ENCODE measurements at regions of chr2 and their contacts with region 1.

Region 1: GRCh38 chr2:189661148-189661956 is at the start of gene ASNSD1:
- DNase-seq: peak; percentile 95 to 99
- ATAC-seq: peak; percentile 96 to 98
- H3K4me3 ChIP-seq: peak within 1 kb of the TSS; percentile 78
- H3K27ac ChIP-seq: peak within 1 kb of the TSS; percentile 88 to 93
- H3K4me1 ChIP-seq: peaks cover 13% of the 10 kb centered on the region
- CTCF ChIP-seq: peak; percentile 99
- EP300 ChIP-seq: no peak
- POLR2A ChIP-seq: peak; percentile 95
- RAD21 ChIP-seq: peak; percentile 92 to 94
- polyA plus RNA-seq, gene ASNSD1: 47.7 and 69.0 TPM in 2 replicates

Region 2: DNA sequence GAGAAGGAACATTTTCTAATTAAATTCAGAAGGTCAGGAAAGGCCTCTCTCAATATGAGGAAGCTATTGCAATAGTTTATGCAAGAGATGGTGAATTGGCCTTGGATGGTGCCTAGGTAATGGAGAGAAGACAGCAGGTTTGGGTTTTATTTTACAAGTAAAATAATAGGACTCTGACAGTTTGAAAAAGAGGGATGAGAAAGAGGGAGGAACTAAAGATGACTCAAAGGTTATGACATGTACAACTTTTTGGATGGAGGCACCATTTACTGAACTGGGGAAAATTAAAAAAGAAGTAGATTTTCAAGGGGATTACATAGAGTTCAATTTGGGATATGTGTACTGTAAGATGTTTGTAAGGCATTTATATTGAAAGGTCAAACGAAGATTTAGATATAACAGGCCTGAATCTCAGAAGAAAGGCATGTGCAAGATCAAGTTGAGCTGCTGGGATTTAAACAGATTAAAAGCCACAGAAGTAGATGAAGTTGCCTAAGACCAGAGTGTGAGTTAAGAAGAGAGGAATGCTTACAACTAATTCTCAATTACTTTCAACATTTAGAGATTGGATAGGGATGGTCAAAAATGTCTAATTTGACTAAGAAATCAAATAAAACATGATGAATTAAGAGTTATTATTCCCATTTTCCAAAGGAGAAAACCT is 12.4 kb before region 1 on chr2:
- CTCF ChIA-PET with region 1: interaction called, 33 read pairs
- POLR2A ChIA-PET with region 1: no interaction called
- DNase-seq: no peak
- ATAC-seq: no peak
- H3K4me3 ChIP-seq: no peak overlapping the region
- H3K27ac ChIP-seq: no peak overlapping the region
- H3K4me1 ChIP-seq: no peaks in the 10 kb centered on the region
- CTCF ChIP-seq: no peak
- EP300 ChIP-seq: no peak
- POLR2A ChIP-seq: no peak
- RAD21 ChIP-seq: no peak

Region 3: DNA sequence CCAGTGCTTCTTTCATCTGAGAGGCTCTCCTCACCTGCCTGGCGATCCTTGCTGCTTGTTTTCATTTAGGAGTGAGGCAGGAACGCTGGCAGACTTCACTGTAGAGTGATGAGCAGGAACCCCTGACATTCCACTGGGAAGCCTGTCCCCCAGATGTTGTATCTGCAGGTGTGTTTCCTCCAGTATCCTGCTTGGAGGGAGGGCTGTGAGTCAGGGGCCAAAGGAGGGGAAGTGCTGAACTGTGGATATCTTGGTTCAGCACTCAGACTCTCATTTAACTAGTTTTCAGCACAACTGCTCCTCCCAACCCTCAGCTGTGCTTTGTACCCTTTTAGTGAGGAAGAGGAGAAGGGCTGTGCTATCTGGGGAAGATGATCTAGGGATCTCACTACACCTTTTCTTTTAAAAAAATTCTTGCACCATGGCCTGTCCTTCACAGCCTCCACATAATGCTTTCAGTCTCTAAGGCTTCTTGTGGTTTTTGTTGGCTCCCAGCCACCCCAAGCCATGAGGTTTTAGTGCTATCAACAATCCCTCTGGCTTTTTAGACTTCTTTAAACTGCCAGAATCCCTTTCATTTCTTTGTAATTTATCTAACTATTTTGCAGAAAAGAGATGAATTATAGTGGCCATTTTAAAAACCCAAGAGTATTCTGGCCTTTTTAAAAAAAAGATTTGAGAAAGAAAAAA is 24.3 kb after region 1 on chr2:
- CTCF ChIA-PET with region 1: interaction called, 13 read pairs
- POLR2A ChIA-PET with region 1: no interaction called
- DNase-seq: no peak
- ATAC-seq: no peak
- H3K4me3 ChIP-seq: no peak overlapping the region
- H3K27ac ChIP-seq: no peak overlapping the region
- H3K4me1 ChIP-seq: no peaks in the 10 kb centered on the region
- CTCF ChIP-seq: no peak
- EP300 ChIP-seq: no peak
- POLR2A ChIP-seq: no peak
- RAD21 ChIP-seq: no peak

Region 4: DNA sequence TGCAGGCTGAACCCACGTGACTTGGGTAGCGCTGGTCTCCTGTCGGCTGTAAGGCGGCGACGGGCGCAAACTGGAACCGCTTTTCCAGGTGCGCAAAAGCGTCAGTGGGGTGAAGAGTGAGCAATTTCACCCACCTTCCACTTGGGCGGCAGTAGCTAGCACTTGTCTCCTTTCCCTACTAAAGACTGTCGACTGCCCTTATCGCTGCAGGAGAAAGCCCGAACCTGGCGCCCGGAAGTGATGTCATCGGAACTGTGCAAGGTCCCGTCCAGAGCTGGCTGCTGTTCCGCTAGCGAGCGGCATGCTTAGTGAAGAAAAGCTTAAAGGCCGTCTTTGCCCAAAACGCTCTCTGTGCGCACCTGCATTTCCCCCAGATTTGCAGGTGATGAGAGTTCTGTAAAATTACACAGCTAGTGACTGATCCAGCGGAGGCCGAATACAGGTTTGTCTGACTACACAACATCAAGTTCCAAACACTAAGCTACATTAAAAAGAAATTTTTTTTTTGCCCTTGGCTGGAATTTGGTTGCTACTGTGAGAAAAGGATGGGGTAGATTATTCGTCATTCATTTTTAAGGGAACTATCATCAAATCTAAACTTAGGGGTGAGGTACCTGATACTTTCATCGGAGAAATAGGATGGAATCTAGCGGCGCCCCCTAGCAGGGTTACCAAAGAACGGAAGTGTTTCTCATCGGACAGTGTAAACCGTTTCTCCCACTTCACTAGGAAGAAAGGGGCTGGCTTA is 101.4 kb after region 1 on chr2 and contains the start of gene OSGEPL1:
- CTCF ChIA-PET with region 1: interaction called, 11 read pairs
- POLR2A ChIA-PET with region 1: interaction called, 4 read pairs
- DNase-seq: peak; percentile 60 to 97
- ATAC-seq: peak; percentile 98 to 99
- H3K4me3 ChIP-seq: peak within 1 kb of the TSS; percentile 95
- H3K27ac ChIP-seq: peak within 1 kb of the TSS; percentile 94 to 98
- H3K4me1 ChIP-seq: peaks cover 13% of the 10 kb centered on the region
- CTCF ChIP-seq: peak; percentile 66
- EP300 ChIP-seq: no peak
- POLR2A ChIP-seq: peak; percentile 88
- RAD21 ChIP-seq: peak in 1 of 2 experiments; percentile 14; a peak in 1 of 5 replicates
- polyA plus RNA-seq, gene OSGEPL1: 13.3 and 14.4 TPM in 2 replicates